B cell (primary cell): ENCODE measurements at regions of chr1 and their contacts with region 1.

Region 1: GRCh38 chr1:3618881-3619671 is 5.7 kb upstream of the TPRG1L start:
- DNase-seq: peak; percentile 88
- ATAC-seq: peak; percentile 95
- H3K4me3 ChIP-seq: no peak overlapping the region
- H3K4me3 Mint-ChIP-seq: peak overlapping the region; percentile 67
- H3K27ac ChIP-seq: no peak overlapping the region
- H3K27ac Mint-ChIP-seq: peak overlapping the region; percentile 52
- H3K4me1 ChIP-seq: peaks cover 11 to 23% of the 10 kb centered on the region in 2 donors
- H3K4me1 Mint-ChIP-seq: peaks cover 40% of the 10 kb centered on the region
- H3K27me3 ChIP-seq: peaks cover 0 to 15% (median 0%) of the 10 kb centered on the region in 4 experiments
- H3K27me3 Mint-ChIP-seq: peaks cover 17% of the 10 kb centered on the region
- CTCF ChIP-seq: peak; percentile 91

Region 2: DNA sequence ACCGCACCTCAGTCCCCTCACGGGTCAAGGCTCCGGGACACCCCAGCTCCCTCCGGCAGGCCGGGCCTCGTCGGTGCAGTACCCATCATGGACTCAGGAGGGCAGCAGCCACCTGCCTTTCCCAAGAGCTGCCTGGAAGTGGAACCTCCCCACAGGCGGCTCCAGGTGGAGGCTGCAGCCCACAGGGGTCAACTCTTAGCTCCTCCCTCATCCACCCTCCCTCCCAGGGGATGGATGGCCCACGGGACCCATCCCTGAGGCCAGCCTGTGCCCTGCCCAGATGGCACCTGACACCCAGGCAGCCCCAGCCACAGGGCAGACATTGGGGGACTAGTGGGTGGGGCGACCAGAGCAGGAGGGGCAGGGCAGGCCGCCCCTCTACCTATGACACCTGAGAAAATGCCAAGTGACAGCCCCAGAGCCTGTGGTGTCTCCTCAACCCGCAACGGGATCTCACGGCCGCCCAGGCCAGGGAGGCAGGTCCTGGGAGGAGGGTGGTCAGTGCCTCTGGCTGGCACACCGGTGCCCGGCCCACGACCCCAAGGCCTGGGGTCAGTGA is 165.8 kb before region 1 on chr1:
- CTCF ChIA-PET with region 1: interaction called, 65 read pairs
- POLR2A ChIA-PET with region 1: interaction called, 3 read pairs
- intact Hi-C with region 1: no loop called
- DNase-seq: peak; percentile 82
- ATAC-seq: peak; percentile 84
- H3K4me3 ChIP-seq: no peak overlapping the region
- H3K4me3 Mint-ChIP-seq: peak overlapping the region; percentile 71
- H3K27ac ChIP-seq: no peak overlapping the region
- H3K27ac Mint-ChIP-seq: no peak overlapping the region
- H3K4me1 ChIP-seq: peaks cover 16 to 20% of the 10 kb centered on the region in 2 donors
- H3K4me1 Mint-ChIP-seq: peaks cover 3% of the 10 kb centered on the region
- H3K27me3 ChIP-seq: peaks cover 0 to 44% (median 21%) of the 10 kb centered on the region in 4 experiments
- H3K27me3 Mint-ChIP-seq: peaks cover 26% of the 10 kb centered on the region
- CTCF ChIP-seq: peak; percentile 92

Region 3: DNA sequence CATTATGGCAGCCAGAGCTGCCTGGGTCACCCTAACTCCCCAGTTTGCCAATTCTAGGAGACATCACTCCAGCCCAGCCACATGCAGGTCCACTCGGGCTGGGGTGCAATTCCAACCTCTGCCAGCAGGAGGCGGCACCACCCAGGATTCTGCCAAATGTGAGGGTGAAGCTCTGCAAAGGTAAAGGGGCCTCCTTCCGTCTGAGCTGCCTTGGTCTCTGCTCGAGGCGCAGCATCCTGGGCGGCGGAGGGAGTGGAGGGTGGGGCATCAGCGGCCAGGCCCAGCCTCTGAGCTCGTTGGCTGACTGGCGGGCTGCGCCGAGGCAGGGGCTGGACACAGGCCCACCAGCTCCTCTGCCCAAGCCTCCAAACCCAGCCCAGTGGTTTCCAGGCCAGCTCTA is 100.8 kb before region 1 on chr1:
- CTCF ChIA-PET with region 1: interaction called, 18 read pairs
- POLR2A ChIA-PET with region 1: no interaction called
- intact Hi-C with region 1: no loop called
- DNase-seq: peak; percentile 32
- ATAC-seq: no peak
- H3K4me3 ChIP-seq: no peak overlapping the region
- H3K4me3 Mint-ChIP-seq: no peak overlapping the region
- H3K27ac ChIP-seq: no peak overlapping the region
- H3K27ac Mint-ChIP-seq: no peak overlapping the region
- H3K4me1 ChIP-seq: no peaks in the 10 kb centered on the region
- H3K4me1 Mint-ChIP-seq: no peaks in the 10 kb centered on the region
- H3K27me3 ChIP-seq: no peaks in the 10 kb centered on the region
- H3K27me3 Mint-ChIP-seq: no peaks in the 10 kb centered on the region
- CTCF ChIP-seq: peak; percentile 79

Region 4: GRCh38 chr1:3564921-3565827 is 53.9 kb before region 1 on chr1:
- CTCF ChIA-PET with region 1: interaction called, 48 read pairs
- POLR2A ChIA-PET with region 1: no interaction called
- intact Hi-C with region 1: no loop called
- DNase-seq: peak; percentile 67
- ATAC-seq: no peak
- H3K4me3 ChIP-seq: no peak overlapping the region
- H3K4me3 Mint-ChIP-seq: no peak overlapping the region
- H3K27ac ChIP-seq: no peak overlapping the region
- H3K27ac Mint-ChIP-seq: no peak overlapping the region
- H3K4me1 ChIP-seq: no peaks in the 10 kb centered on the region
- H3K4me1 Mint-ChIP-seq: no peaks in the 10 kb centered on the region
- H3K27me3 ChIP-seq: no peaks in the 10 kb centered on the region
- H3K27me3 Mint-ChIP-seq: peaks cover 3% of the 10 kb centered on the region
- CTCF ChIP-seq: peak; percentile 81

Region 5: GRCh38 chr1:3649342-3650247 is 30.5 kb after region 1 on chr1 and contains the start of gene WRAP73:
- CTCF ChIA-PET with region 1: interaction called, 14 read pairs
- POLR2A ChIA-PET with region 1: interaction called, 3 read pairs
- intact Hi-C with region 1: loop called (anchors 1 kb)
- DNase-seq: peak; percentile 94
- ATAC-seq: peak; percentile 93
- H3K4me3 ChIP-seq: peak within 1 kb of the TSS; percentile 25 to 90 (median 79)
- H3K4me3 Mint-ChIP-seq: peak within 1 kb of the TSS; percentile 91
- H3K27ac ChIP-seq: peak within 1 kb of the TSS in 1 of 2 donors; percentile 69
- H3K27ac Mint-ChIP-seq: peak within 1 kb of the TSS; percentile 73
- H3K4me1 ChIP-seq: peaks cover 37 to 43% of the 10 kb centered on the region in 2 donors
- H3K4me1 Mint-ChIP-seq: peaks cover 30% of the 10 kb centered on the region
- H3K27me3 ChIP-seq: peaks cover 0 to 38% (median 23%) of the 10 kb centered on the region in 4 experiments
- H3K27me3 Mint-ChIP-seq: peaks cover 21% of the 10 kb centered on the region
- CTCF ChIP-seq: peak; percentile 42
- total RNA-seq, gene WRAP73: 37.1 and 37.5 TPM in 2 replicates

Region 6: GRCh38 chr1:3727042-3727824 is 108.2 kb after region 1 on chr1:
- CTCF ChIA-PET with region 1: interaction called, 18 read pairs
- POLR2A ChIA-PET with region 1: no interaction called
- intact Hi-C with region 1: loop called (anchors 2 kb)
- DNase-seq: no peak
- ATAC-seq: no peak
- H3K4me3 ChIP-seq: no peak overlapping the region
- H3K4me3 Mint-ChIP-seq: no peak overlapping the region
- H3K27ac ChIP-seq: no peak overlapping the region
- H3K27ac Mint-ChIP-seq: no peak overlapping the region
- H3K4me1 ChIP-seq: no peaks in the 10 kb centered on the region
- H3K4me1 Mint-ChIP-seq: peaks cover 2% of the 10 kb centered on the region
- H3K27me3 ChIP-seq: peaks cover 0 to 3% (median 0%) of the 10 kb centered on the region in 4 experiments
- H3K27me3 Mint-ChIP-seq: peaks cover 3% of the 10 kb centered on the region
- CTCF ChIP-seq: peak; percentile 23